ENCODE measurements at regions of chr17 and their contacts with region 1.

Region 1: DNA sequence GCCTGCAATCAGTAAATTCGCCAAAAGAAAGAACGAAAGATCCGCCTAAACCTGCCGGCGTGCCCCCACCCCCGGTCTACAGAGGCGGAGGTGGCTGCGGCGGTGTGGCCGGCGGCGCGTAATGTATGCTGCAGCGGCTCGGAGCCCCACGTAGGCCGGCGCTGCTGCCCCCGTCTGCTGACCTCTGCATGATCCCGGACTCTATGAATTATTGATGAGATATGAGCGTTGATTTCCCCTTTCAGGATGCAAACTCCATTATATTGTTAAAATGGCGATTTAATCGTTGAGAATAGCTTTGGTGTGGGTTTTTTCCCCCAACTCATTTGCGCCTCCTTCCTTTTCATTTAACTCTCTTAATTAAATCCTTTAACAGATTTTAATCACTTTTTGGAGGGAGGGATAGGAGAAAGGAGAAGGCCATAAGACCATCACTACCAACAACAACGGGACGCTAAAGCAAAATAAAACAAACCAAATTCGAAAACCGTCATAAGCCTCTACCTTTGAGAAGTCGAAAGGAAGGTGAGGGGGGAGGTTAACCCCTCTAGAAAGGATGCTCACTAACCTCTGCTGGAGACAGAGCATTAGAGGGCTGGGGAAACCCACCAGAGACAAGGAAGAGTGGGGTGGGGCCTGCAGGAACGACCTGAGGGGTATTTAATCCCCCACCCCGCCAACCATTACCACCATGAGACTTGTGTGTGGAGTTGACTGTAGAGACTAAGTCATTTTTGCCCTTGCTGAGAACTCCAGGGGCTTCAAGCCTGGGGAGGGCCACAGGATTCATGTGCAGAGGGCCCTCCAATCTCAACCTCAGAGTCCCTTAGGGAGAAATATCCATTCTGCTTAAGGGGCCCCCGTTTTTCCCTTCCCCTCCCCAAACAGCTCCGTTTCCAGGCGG is 3.4 kb downstream of the HOXB3 start:
- DNase-seq: peak; percentile 36
- H3K4me3 Mint-ChIP-seq: peak overlapping the region; percentile 83
- H3K27ac Mint-ChIP-seq: no peak overlapping the region
- H3K4me1 Mint-ChIP-seq: peaks cover 27% of the 10 kb centered on the region
- H3K27me3 Mint-ChIP-seq: peaks cover 92% of the 10 kb centered on the region

Region 2: GRCh38 chr17:48335858-48336500 is 250.6 kb before region 1 on chr17:
- CTCF ChIA-PET with region 1: interaction called, 40 read pairs
- intact Hi-C with region 1: no loop called
- DNase-seq: no peak
- H3K4me3 Mint-ChIP-seq: no peak overlapping the region
- H3K27ac Mint-ChIP-seq: no peak overlapping the region
- H3K4me1 Mint-ChIP-seq: peaks cover 6% of the 10 kb centered on the region
- H3K27me3 Mint-ChIP-seq: no peaks in the 10 kb centered on the region

Region 3: GRCh38 chr17:48505787-48506645 is 80.6 kb before region 1 on chr17:
- CTCF ChIA-PET with region 1: no interaction called
- intact Hi-C with region 1: no loop called
- DNase-seq: peak; percentile 60
- H3K4me3 Mint-ChIP-seq: no peak overlapping the region
- H3K27ac Mint-ChIP-seq: no peak overlapping the region
- H3K4me1 Mint-ChIP-seq: peaks cover 19% of the 10 kb centered on the region
- H3K27me3 Mint-ChIP-seq: peaks cover 11% of the 10 kb centered on the region

Region 4: GRCh38 chr17:48564188-48565021 is 22.2 kb before region 1 on chr17:
- CTCF ChIA-PET with region 1: no interaction called
- intact Hi-C with region 1: no loop called
- DNase-seq: no peak
- H3K4me3 Mint-ChIP-seq: peak overlapping the region; percentile 33
- H3K27ac Mint-ChIP-seq: no peak overlapping the region
- H3K4me1 Mint-ChIP-seq: peaks cover 5% of the 10 kb centered on the region
- H3K27me3 Mint-ChIP-seq: peaks cover 20% of the 10 kb centered on the region

Region 5: DNA sequence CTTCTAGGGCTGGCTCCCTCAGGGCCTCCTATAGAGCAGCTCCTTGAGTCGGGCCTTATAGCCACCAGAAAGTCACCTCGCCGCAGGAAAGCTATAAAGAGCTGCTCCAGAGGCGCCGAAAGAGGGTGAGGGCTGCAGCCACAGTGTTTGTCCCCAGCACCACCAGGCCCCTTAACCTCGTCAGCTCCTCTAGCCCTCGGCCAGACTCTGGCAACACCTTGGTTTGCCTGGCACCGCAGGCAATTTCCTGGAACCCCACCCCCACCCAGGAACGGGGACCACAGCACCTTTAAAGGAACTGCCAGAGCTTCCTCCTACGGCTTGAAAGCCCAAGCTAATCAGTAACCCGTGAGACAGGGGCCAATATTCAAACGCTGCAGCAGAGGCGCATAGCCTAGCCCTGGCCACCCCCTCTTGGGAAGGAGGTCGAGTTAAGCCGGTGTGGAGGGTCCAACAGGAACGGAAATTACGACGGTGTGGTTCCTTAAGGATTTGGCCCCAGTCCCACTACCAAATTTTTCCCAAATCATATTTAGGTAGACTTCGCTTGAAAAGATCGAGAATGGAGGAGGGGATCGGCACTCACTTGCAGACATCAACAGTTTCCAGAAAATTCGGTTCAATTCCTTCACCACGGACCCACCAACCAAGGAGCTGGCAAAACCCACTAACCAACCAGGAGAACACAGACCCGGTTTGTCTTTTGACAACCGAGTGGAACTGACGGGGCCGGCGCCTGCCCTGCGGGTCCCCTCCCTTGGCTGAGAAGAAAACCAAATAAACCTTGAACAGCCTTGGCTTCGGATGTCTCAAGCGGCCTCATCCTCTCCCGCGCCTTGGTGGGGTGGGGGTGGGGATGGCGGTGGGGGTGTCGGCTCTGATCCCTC is 15.2 kb after region 1 on chr17:
- CTCF ChIA-PET with region 1: interaction called, 10 read pairs
- intact Hi-C with region 1: no loop called
- DNase-seq: no peak
- H3K4me3 Mint-ChIP-seq: no peak overlapping the region
- H3K27ac Mint-ChIP-seq: no peak overlapping the region
- H3K4me1 Mint-ChIP-seq: peaks cover 33% of the 10 kb centered on the region
- H3K27me3 Mint-ChIP-seq: peaks cover 88% of the 10 kb centered on the region

Region 6: GRCh38 chr17:48690655-48691054 is 104.0 kb after region 1 on chr17:
- CTCF ChIA-PET with region 1: no interaction called
- intact Hi-C with region 1: no loop called
- DNase-seq: no peak
- H3K4me3 Mint-ChIP-seq: no peak overlapping the region
- H3K27ac Mint-ChIP-seq: no peak overlapping the region
- H3K4me1 Mint-ChIP-seq: no peaks in the 10 kb centered on the region
- H3K27me3 Mint-ChIP-seq: peaks cover 7% of the 10 kb centered on the region

Measured in activated naive CD4-positive, alpha-beta T cell treated with anti-CD3 and anti-CD28 coated beads for 36 hours (primary cell).